Natural killer cell (primary cell): ENCODE measurements at regions of chr12 and their contacts with region 1.

Region 1: GRCh38 chr12:45895961-45896360 is 94.4 kb downstream of the SCAF11 start:
- DNase-seq: no peak
- ATAC-seq: peak in 2 of 3 donors; percentile 76 to 87
- H3K4me3 ChIP-seq: no peak overlapping the region
- H3K4me3 Mint-ChIP-seq: peak overlapping the region; percentile 64
- H3K27ac ChIP-seq: peak overlapping the region; percentile 41
- H3K27ac Mint-ChIP-seq: peak overlapping the region; percentile 65 to 76
- H3K4me1 ChIP-seq: peaks cover 7% of the 10 kb centered on the region
- H3K4me1 Mint-ChIP-seq: peaks cover 27 to 31% of the 10 kb centered on the region in 2 donors
- H3K27me3 ChIP-seq: no peaks in the 10 kb centered on the region
- H3K27me3 Mint-ChIP-seq: no peaks in the 10 kb centered on the region
- CTCF ChIP-seq: no peak

Region 2: DNA sequence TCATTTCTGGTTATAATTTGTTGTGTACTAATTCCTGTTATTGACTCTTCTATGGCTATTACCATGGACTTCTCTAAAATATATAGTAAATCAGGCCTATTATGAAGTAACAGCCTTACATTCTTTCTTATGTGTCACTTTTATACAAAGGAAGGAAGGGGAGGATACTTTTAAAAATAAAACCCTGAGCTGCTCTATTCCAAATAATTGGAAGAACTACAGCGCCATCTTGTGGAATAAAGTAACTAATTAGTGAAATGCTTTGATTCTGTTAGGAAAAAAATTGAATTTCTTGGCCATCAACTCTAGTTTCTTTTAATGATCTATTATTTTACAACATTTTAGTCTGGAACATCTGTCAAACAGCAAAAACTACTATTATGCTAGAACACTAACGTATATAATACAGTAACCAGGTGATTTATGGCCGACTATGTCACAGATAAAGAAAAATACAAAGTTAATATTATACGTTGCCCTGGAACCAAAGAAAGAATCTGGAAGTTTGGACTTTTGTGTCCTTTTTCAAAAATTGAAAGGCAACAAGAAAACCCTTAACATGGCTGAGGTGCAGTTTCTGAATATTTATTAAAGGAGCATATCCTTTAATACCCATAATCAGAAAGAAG is 964.9 kb before region 1 on chr12:
- intact Hi-C with region 1: no loop called
- DNase-seq: peak in 1 of 2 donors; percentile 78
- ATAC-seq: peak in 2 of 3 donors; percentile 26 to 42
- H3K4me3 ChIP-seq: no peak overlapping the region
- H3K4me3 Mint-ChIP-seq: no peak overlapping the region
- H3K27ac ChIP-seq: no peak overlapping the region
- H3K27ac Mint-ChIP-seq: no peak overlapping the region
- H3K4me1 ChIP-seq: no peaks in the 10 kb centered on the region
- H3K4me1 Mint-ChIP-seq: no peaks in the 10 kb centered on the region
- H3K27me3 ChIP-seq: no peaks in the 10 kb centered on the region
- H3K27me3 Mint-ChIP-seq: peaks cover 5 to 8% of the 10 kb centered on the region in 2 donors
- CTCF ChIP-seq: peak; percentile 78

Region 3: DNA sequence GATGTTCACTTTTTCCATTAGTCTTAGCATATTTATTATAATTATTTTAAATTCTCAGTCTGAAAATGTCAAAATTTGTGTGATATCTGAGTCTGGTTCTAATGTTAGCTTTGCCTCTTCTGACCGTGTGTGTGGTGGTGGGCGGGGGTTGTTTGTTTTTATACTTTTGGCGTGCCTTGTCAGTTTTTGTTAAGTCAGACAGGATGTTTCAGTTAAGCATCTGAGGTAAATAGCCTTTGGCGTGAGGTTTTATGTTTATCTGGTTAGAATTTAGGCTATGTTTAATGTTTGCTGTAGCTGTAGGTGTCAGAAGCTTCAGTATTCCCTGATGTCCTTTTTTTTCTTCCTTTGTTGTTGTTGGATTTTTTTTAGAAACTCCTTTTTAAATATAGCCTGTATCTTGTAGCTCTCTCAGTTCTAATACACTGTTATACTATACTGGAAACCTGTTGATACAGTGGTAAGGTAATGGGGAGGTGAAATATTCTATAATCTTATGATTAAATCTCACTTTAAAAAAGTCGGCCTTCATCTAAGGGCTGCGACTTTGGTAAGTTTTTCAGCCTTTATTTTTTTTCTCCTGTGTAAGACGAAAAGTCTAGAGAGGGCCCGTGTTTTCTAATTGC is 17.2 kb before region 1 on chr12:
- intact Hi-C with region 1: loop called (anchors 1 kb)
- DNase-seq: peak; percentile 37 to 53
- ATAC-seq: peak; percentile 74 to 80 (median 80)
- H3K4me3 ChIP-seq: no peak overlapping the region
- H3K4me3 Mint-ChIP-seq: peak overlapping the region; percentile 81
- H3K27ac ChIP-seq: peak overlapping the region; percentile 83
- H3K27ac Mint-ChIP-seq: peak overlapping the region; percentile 78 to 95
- H3K4me1 ChIP-seq: peaks cover 11% of the 10 kb centered on the region
- H3K4me1 Mint-ChIP-seq: peaks cover 59 to 66% of the 10 kb centered on the region in 2 donors
- H3K27me3 ChIP-seq: no peaks in the 10 kb centered on the region
- H3K27me3 Mint-ChIP-seq: no peaks in the 10 kb centered on the region
- CTCF ChIP-seq: no peak

Region 4: GRCh38 chr12:46071769-46072624 is 176.0 kb after region 1 on chr12:
- intact Hi-C with region 1: no loop called
- DNase-seq: peak; percentile 25 to 78
- ATAC-seq: peak; percentile 82 to 96 (median 92)
- H3K4me3 ChIP-seq: no peak overlapping the region
- H3K4me3 Mint-ChIP-seq: no peak overlapping the region
- H3K27ac ChIP-seq: no peak overlapping the region
- H3K27ac Mint-ChIP-seq: no peak overlapping the region
- H3K4me1 ChIP-seq: no peaks in the 10 kb centered on the region
- H3K4me1 Mint-ChIP-seq: peaks cover 8% of the 10 kb centered on the region in 2 donors
- H3K27me3 ChIP-seq: no peaks in the 10 kb centered on the region
- H3K27me3 Mint-ChIP-seq: peaks cover 19 to 31% of the 10 kb centered on the region in 2 donors
- CTCF ChIP-seq: peak; percentile 80